ENCODE measurements at regions of chr7 and their contacts with region 1.

Region 1: GRCh38 chr7:33062782-33063443 is 337 bp upstream of the NT5C3A start:
- DNase-seq: peak; percentile 94 to 97 (median 94)
- ATAC-seq: peak; percentile 98 to 100 (median 99)
- H3K4me3 ChIP-seq: peak overlapping the region; percentile 68 to 95 (median 86)
- H3K27ac ChIP-seq: peak overlapping the region; percentile 91 to 98 (median 96)
- H3K4me1 ChIP-seq: peaks cover 3 to 41% (median 20%) of the 10 kb centered on the region in 12 donors
- H3K27me3 ChIP-seq: no peaks in the 10 kb centered on the region
- CTCF ChIP-seq: no peak
- POLR2A ChIP-seq: peak in 1 of 2 donors; percentile 83

Region 2: DNA sequence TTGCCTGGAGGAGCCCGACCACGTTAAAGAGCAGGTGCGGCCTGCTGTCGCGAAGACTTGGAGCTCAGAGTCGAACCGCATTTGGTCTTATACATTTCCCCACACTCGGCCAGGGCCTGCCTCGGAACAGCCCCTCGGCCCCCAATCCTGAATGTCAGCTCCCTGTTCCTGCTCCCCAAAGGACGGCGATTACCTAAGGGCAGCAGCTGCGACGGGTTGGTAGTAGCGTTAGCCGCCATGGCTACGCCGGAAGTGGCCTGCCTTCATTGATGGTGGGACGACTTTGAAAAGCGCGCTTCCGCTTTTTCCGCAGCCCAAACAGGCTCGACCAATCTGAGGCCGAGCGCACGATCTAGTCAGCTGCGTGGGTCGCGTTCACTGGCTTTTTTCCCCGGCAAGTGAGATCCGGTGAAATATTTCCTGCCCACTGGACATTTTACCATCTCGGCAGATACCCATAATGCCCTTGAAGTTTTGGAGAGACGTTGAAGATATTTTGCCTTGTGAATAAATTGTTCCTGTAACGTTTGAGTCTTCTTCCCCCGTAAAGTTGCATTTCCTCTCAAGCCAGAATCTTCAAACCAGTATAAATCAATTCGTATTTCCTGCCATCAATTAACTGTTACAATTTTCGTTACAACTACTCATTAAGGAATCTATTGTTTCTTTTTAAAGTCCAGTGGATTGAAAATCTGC is 572.6 kb before region 1 on chr7 and contains the start of gene LSM5:
- intact Hi-C with region 1: no loop called
- DNase-seq: peak; percentile 91 to 96 (median 93)
- ATAC-seq: peak; percentile 91 to 92 (median 91)
- H3K4me3 ChIP-seq: peak within 1 kb of the TSS; percentile 29 to 82 (median 68)
- H3K27ac ChIP-seq: peak within 1 kb of the TSS; percentile 71 to 93 (median 84)
- H3K4me1 ChIP-seq: peaks cover 0 to 23% (median 13%) of the 10 kb centered on the region in 12 donors
- H3K27me3 ChIP-seq: no peaks in the 10 kb centered on the region
- CTCF ChIP-seq: no peak
- POLR2A ChIP-seq: peak in 1 of 2 donors; percentile 38
- total RNA-seq, gene LSM5: 10.8 to 43.0 (median 35.6) TPM

Region 3: GRCh38 chr7:32957326-32958045 is 105.4 kb before region 1 on chr7 and contains the start of gene FKBP9:
- intact Hi-C with region 1: loop called in 3 of 10 experiments (anchors 5 kb)
- DNase-seq: peak; percentile 85 to 96 (median 90)
- ATAC-seq: peak; percentile 85 to 97 (median 94)
- H3K4me3 ChIP-seq: peak within 1 kb of the TSS; percentile 79 to 100 (median 92)
- H3K27ac ChIP-seq: peak within 1 kb of the TSS; percentile 89 to 100 (median 98)
- H3K4me1 ChIP-seq: peaks cover 0 to 32% (median 13%) of the 10 kb centered on the region in 12 donors
- H3K27me3 ChIP-seq: no peaks in the 10 kb centered on the region
- CTCF ChIP-seq: peak in 1 of 12 donors; percentile 6
- POLR2A ChIP-seq: peak in 1 of 2 donors; percentile 85
- total RNA-seq, gene FKBP9: 91.1 to 146 (median 130) TPM

Region 4: DNA sequence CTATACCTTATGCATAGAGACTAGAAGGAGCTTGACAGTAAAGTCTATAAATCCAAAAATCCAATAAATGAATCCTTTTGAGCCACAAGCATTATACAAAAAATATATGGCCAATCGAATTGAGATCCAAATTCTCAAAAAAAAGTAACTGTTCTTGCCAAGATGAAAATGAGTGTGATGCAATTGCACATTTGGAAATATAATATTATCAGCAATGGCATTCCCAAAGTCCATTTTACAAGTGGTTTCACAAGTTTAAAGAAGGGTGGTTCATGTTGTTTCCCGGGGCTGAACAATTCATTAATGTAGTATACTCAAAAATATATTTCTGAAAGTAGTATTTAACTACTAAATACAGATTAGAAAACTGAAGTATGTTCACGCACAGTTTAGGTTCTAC is 39.0 kb after region 1 on chr7:
- intact Hi-C with region 1: loop called in 4 of 10 experiments (anchors 5 kb)
- DNase-seq: no peak
- ATAC-seq: no peak
- H3K4me3 ChIP-seq: no peak overlapping the region
- H3K27ac ChIP-seq: no peak overlapping the region
- H3K4me1 ChIP-seq: peaks cover 0 to 44% (median 16%) of the 10 kb centered on the region in 12 donors
- H3K27me3 ChIP-seq: no peaks in the 10 kb centered on the region
- CTCF ChIP-seq: no peak
- POLR2A ChIP-seq: no peak

Region 5: GRCh38 chr7:33128990-33129805 is 66.3 kb after region 1 on chr7 and contains the start of gene BBS9:
- intact Hi-C with region 1: loop called in 2 of 10 experiments (anchors 2 to 5 kb)
- DNase-seq: peak; percentile 94 to 97 (median 96)
- ATAC-seq: peak; percentile 98 to 100 (median 99)
- H3K4me3 ChIP-seq: peak within 1 kb of the TSS; percentile 54 to 82 (median 72)
- H3K27ac ChIP-seq: peak within 1 kb of the TSS; percentile 56 to 89 (median 86)
- H3K4me1 ChIP-seq: peaks cover 0 to 25% (median 11%) of the 10 kb centered on the region in 12 donors
- H3K27me3 ChIP-seq: no peaks in the 10 kb centered on the region
- CTCF ChIP-seq: peak in 1 of 12 donors; percentile 15
- POLR2A ChIP-seq: peak in 1 of 2 donors; percentile 45
- total RNA-seq, gene BBS9: 8.4 to 29.3 (median 11.4) TPM

Region 6: DNA sequence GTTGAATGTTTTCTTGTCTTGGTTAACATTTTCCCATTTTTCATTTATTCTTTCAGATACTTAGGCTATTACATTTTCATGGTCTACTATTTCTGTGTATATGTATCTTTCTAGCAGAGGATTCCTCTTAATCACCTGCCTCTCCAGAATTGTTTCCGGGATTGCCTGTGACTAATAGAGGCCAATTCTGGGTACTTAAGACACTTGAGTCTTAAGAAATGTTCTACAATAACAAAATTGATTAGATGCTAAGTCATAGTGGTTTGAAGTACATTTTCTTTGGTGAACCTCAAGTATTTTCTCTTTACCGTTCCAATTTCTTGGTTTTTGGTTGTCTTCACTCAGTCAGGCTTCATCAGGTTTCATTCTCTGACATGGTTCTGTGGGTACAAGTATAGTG is 92.9 kb after region 1 on chr7:
- intact Hi-C with region 1: no loop called
- DNase-seq: no peak
- ATAC-seq: no peak
- H3K4me3 ChIP-seq: no peak overlapping the region
- H3K27ac ChIP-seq: no peak overlapping the region
- H3K4me1 ChIP-seq: peaks cover 0 to 18% (median 10%) of the 10 kb centered on the region in 12 donors
- H3K27me3 ChIP-seq: no peaks in the 10 kb centered on the region
- CTCF ChIP-seq: no peak
- POLR2A ChIP-seq: no peak